ENCODE measurements at regions of chr9 and their contacts with region 1.

Region 1: GRCh38 chr9:34178520-34179212 is at the start of gene UBAP1:
- DNase-seq: peak; percentile 98
- ATAC-seq: peak; percentile 99
- total RNA-seq, gene UBAP1: 48.9 TPM

Region 2: DNA sequence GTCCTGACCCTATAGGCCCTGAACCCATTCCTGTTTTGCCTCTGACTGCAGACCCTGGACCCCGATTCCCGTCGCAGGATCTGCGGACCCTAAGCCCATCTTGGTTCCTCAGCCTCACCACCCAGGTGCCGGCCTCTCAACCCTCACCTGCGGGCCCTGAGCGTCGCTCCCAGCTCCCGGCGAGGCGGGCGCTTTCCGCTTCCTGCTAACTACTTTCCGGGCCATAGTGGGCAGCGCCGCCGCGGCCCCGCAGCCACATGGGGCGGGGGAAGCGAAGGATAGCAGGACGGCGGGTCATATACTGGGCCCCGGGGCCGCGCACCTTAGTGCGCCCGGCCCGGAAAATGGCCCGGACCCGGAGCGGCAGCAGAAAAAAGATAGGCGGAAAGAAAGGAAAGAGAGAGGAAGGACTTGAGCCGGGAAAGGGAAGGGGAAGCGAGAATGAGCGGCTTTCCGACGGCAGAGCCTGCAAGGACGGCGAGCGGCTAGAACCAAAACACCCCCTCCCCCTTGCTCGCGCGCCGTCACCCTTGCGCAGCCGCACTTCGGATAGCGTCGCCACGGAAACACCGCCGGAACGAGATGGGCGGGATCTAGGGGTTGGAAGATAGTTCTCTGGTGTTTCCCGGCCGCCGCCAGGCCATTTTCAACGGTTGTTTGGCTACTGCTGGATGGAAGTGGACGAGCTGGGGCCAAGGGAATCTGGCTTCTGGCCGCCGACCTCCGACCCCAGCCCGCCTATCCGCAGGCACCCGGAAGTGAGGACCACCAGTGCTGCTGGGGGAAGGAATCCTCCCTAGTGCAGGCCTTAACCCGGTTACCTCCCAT is 52.2 kb before region 1 on chr9 and contains the start of gene DCAF12:
- intact Hi-C with region 1: loop called (anchors 2 kb)
- DNase-seq: peak; percentile 95
- ATAC-seq: peak; percentile 97
- total RNA-seq, gene DCAF12: 17.6 TPM